OCI-LY7 (cell line): ENCODE measurements at regions of chr5 and their contacts with region 1.

Region 1: DNA sequence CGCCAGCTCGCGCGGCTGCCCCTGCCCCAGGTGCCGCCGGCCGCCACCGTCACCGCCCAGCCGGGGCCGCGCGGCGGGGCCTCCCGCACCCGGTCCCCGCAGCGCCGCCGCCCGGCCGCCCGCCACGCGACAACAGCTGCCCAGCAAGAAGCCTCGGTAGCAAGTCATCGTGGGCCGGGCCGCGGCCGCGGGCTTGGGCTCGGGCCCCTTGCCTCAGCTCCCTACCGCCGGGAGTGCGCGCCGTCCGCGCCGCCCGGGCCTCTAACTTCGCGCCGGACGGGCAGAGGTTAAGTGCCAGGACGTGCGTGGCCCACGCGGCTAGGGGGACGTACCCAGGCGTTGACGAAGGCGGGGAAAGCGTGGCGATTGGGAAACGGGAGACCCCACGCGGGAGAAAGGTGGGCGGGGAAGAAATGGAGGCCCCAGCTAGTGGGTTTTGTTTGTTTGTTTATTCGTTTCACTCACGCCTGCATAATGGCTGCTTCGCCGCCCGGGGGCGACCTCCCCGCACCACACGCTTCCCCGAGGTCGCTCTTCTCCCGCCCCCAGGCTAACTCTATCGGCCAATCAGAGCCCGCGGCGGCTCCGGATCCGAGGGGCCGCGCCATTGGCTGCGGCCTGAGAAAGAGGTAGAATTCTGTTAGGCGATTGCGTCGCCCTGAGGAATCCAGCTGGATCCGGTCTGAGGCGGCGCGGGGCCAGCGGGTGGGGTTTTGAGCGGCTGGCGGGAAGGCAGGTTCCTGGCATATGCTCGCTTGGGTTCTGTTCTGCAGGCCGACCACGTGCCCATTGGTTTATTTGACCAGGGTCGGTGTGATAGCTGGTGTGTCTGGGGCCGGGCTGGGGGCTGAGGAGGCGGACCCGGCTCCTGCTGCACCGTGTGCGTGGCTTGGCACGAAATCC is at the start of gene NADK2:
- DNase-seq: peak; percentile 97
- H3K4me3 ChIP-seq: peak within 1 kb of the TSS; percentile 84
- H3K27ac ChIP-seq: peak within 1 kb of the TSS; percentile 85
- H3K4me1 ChIP-seq: peaks cover 47% of the 10 kb centered on the region
- CTCF ChIP-seq: peak; percentile 72
- total RNA-seq, gene NADK2: 21.2 and 23.8 TPM in 2 replicates

Region 2: GRCh38 chr5:34929150-34929719 is 1312.6 kb before region 1 on chr5 and contains the start of gene DNAJC21:
- CTCF ChIA-PET with region 1: no interaction called
- POLR2A ChIA-PET with region 1: no interaction called
- intact Hi-C with region 1: loop called (anchors 5 kb)
- DNase-seq: peak; percentile 96
- H3K4me3 ChIP-seq: peak within 1 kb of the TSS; percentile 83
- H3K27ac ChIP-seq: peak within 1 kb of the TSS; percentile 46
- H3K4me1 ChIP-seq: peaks cover 38% of the 10 kb centered on the region
- CTCF ChIP-seq: no peak
- total RNA-seq, gene DNAJC21: 29.4 and 43.7 TPM in 2 replicates

Region 3: DNA sequence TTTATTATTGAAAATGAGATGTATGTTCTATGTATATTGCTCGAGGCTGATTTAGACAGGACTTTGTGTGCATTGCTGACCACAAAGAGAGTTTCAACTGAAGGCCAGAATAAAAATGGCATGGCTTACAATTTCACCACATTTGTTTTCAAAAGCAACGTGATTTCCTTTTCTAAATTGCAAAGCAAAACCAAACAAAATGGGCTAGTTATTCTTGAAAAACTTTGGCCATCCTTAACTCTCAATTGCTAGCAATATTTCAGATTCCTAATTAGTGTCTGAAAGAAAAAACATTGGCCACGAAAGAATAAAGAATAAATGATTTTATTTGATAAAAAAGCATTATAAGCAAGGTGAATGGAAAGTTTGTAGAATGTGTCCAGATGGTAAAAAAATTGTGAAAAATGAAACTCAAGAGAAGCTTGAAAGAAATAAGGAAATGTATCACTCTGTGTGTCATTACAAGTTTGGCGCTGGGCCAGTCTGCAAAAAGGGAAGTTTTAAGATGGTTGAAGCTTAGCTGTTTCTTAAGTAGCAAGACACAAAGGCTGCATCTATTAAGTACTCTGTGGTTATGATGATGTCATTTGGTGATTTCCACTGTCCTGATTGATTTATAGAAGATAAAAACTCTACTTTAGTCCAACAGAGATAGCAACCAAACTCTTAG is 922.4 kb before region 1 on chr5:
- CTCF ChIA-PET with region 1: no interaction called
- POLR2A ChIA-PET with region 1: no interaction called
- intact Hi-C with region 1: no loop called
- DNase-seq: no peak
- H3K4me3 ChIP-seq: no peak overlapping the region
- H3K27ac ChIP-seq: no peak overlapping the region
- H3K4me1 ChIP-seq: no peaks in the 10 kb centered on the region
- CTCF ChIP-seq: no peak

Region 4: DNA sequence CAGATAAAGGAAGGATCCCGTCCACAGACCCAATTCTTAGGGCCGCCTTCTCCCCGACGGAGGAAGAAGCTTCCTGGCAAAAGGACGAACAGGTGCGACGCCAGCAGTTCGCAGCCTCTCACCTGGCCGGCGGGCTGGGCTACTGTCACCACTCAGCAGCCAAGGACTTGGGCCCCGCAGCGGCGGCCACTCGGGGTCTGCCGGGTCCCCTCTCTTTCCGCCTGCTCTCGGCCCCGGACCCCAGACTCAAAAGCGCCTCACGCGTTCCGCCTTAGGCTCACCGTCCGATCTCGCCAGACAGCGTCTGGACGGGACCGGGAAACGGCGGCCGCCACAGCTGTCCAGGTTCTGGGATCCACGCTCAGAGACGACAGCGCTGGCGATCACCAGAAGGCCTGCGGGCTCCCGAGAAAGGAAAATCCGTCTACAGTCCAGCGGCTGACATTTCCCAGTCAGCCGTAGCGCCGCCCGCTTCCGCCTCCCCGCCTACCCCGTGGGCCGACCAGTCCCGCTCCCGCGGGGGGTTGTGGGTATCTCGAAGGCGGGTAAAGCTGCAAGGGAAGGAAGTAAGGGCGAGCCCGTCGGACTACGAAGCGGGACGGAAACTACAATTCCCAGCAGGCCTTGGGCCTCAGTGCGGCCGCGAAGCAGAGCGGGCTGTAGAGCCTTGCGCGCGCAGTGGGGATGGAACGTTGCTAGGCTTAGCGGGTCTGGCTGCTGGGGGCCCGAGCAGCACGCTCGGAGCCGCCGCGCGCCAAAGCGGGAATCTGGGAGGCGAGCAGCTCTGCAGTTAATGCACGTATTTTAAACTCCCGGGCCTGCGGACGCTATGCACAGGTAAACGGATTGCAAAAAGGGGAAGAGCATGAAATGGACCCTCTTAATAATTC is 90.2 kb before region 1 on chr5 and contains the starts of genes LMBRD2 and SKP2:
- CTCF ChIA-PET with region 1: interaction called, 3 read pairs
- POLR2A ChIA-PET with region 1: interaction called, 7 read pairs
- intact Hi-C with region 1: loop called (anchors 1 kb)
- DNase-seq: peak; percentile 98
- H3K4me3 ChIP-seq: peak within 1 kb of the TSS; percentile 85
- H3K27ac ChIP-seq: peak within 1 kb of the TSS; percentile 64
- H3K4me1 ChIP-seq: peaks cover 23% of the 10 kb centered on the region
- CTCF ChIP-seq: no peak
- total RNA-seq, gene LMBRD2: 9.1 and 32.0 TPM in 2 replicates
- total RNA-seq, gene SKP2: 70.5 and 71.8 TPM in 2 replicates

Region 5: DNA sequence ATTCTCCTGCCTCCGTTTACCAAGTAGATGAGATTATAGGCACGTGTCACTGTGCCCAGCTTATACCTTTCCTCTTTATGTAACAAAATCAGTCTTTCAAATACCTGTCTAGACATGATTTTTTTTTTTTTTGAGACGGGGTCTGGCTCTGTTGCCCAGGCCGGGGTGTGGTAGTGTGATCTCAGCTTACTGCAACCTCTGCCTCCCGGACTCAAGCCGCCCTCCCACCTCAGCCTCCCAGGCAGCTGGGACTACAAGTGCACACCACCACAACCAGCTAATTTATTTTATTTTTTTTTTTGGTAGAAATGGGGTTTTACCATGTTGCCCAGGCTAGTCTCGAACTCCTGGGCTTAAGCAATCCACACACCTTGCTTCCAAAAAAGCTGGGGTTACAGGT is 13.4 kb before region 1 on chr5:
- CTCF ChIA-PET with region 1: interaction called, 3 read pairs
- POLR2A ChIA-PET with region 1: interaction called, 11 read pairs
- intact Hi-C with region 1: no loop called
- DNase-seq: no peak
- H3K4me3 ChIP-seq: no peak overlapping the region
- H3K27ac ChIP-seq: no peak overlapping the region
- H3K4me1 ChIP-seq: no peaks in the 10 kb centered on the region
- CTCF ChIP-seq: no peak

Region 6: DNA sequence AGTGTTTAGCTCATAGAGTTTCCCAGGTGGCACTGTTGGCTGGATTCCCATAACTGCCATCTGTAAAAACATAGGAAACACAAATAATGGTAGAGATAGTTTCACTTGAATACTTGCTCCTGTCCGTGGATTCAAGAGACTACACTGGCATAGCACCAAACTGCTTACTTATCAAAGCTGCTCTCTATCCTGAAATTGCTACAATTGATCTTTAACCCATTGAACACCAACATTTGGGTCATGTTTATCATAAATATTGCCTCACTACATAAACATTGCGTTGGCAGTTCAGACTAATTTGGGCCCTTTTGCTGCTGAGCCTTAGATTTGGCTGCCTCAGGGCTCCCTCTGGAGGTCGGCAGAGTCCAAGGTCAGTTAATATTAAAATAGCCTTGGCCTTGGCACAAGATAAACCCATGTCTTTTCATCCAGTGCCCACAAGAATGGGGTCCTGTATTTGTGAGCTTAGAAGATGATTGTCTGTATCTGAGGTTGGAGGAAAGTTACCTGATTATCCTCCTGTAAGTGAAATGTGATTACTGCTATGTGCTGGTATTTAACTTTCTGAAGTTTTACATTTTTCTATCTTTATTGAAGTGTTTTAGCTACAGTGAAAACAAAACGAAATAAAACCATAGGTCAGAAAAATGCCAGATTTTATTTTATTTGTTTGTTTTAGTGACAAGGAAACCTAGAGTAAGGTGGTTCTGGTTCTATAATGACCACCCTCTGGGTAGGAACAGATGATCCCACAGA is 63.9 kb after region 1 on chr5:
- CTCF ChIA-PET with region 1: no interaction called
- POLR2A ChIA-PET with region 1: interaction called, 3 read pairs
- intact Hi-C with region 1: loop called (anchors 1 kb)
- DNase-seq: peak; percentile 72
- H3K4me3 ChIP-seq: no peak overlapping the region
- H3K27ac ChIP-seq: no peak overlapping the region
- H3K4me1 ChIP-seq: peaks cover 32% of the 10 kb centered on the region
- CTCF ChIP-seq: peak; percentile 93

Region 7: GRCh38 chr5:36403632-36404311 is 161.9 kb after region 1 on chr5:
- CTCF ChIA-PET with region 1: no interaction called
- POLR2A ChIA-PET with region 1: no interaction called
- intact Hi-C with region 1: no loop called
- DNase-seq: no peak
- H3K4me3 ChIP-seq: no peak overlapping the region
- H3K27ac ChIP-seq: no peak overlapping the region
- H3K4me1 ChIP-seq: no peaks in the 10 kb centered on the region
- CTCF ChIP-seq: no peak

Region 8: DNA sequence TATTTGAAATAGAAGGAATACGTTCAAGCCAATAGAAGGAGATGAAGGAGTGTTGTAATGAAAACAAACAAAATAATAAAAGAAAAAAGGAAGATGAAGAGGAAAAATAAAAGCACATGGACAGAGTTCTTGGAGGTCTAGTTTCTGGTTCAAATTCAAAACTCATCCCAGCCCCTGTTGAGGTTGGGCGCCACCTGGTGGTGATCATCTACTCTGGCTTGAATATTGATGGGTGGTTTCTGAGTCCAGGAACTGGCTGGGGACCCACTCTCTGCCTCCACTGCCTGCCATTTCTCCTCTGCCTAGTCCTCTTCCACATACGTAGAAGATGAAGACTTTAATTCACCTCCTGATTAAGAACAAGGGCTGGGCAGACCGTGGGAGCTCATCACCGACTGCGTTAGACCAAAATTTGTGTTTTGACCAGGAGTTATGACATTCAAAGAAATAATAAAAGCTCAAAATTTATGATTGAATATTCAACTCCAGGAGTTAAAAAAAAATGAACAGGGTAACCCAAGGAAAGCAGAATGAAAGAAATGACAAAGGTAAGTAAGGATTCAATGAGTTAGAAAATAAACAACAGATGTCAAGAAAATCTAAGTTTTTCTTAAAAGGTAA is 265.6 kb after region 1 on chr5:
- CTCF ChIA-PET with region 1: no interaction called
- POLR2A ChIA-PET with region 1: no interaction called
- intact Hi-C with region 1: no loop called
- DNase-seq: peak; percentile 71
- H3K4me3 ChIP-seq: no peak overlapping the region
- H3K27ac ChIP-seq: no peak overlapping the region
- H3K4me1 ChIP-seq: no peaks in the 10 kb centered on the region
- CTCF ChIP-seq: peak; percentile 97

Region 9: GRCh38 chr5:36875790-36876388 is 634.0 kb after region 1 on chr5:
- CTCF ChIA-PET with region 1: no interaction called
- POLR2A ChIA-PET with region 1: no interaction called
- intact Hi-C with region 1: loop called (anchors 5 kb)
- DNase-seq: peak; percentile 87
- H3K4me3 ChIP-seq: peak overlapping the region; percentile 82
- H3K27ac ChIP-seq: peak overlapping the region; percentile 91
- H3K4me1 ChIP-seq: peaks cover 49% of the 10 kb centered on the region
- CTCF ChIP-seq: peak; percentile 74